Common myeloid progenitor, CD34-positive (primary cell): ENCODE measurements at regions of chr5 and their contacts with region 1.

Region 1: GRCh38 chr5:142769741-142770631 is at the start of gene ARHGAP26:
- DNase-seq: peak; percentile 94 to 97 (median 96)
- H3K4me3 ChIP-seq: peak within 1 kb of the TSS; percentile 75 to 94 (median 92)
- H3K27ac ChIP-seq: peak within 1 kb of the TSS in 1 of 2 experiments; percentile 47
- H3K4me1 ChIP-seq: peaks cover 8 to 27% (median 21%) of the 10 kb centered on the region in 4 experiments
- H3K27me3 ChIP-seq: peaks cover 0 to 3% (median 0%) of the 10 kb centered on the region in 5 experiments

Region 2: GRCh38 chr5:142798099-142798770 is 28.2 kb after region 1 on chr5:
- CTCF ChIA-PET with region 1: interaction called, 19 read pairs
- POLR2A ChIA-PET with region 1: no interaction called
- DNase-seq: peak; percentile 63 to 95 (median 92)
- H3K4me3 ChIP-seq: peak overlapping the region in 3 of 7 experiments; percentile 27 to 32 (median 31)
- H3K27ac ChIP-seq: no peak overlapping the region
- H3K4me1 ChIP-seq: peaks cover 17 to 62% (median 41%) of the 10 kb centered on the region in 4 experiments
- H3K27me3 ChIP-seq: no peaks in the 10 kb centered on the region

Region 3: GRCh38 chr5:142845402-142845921 is 75.5 kb after region 1 on chr5:
- CTCF ChIA-PET with region 1: interaction called, 13 read pairs
- POLR2A ChIA-PET with region 1: no interaction called
- DNase-seq: peak in 2 of 3 donors; percentile 21 to 38
- H3K4me3 ChIP-seq: no peak overlapping the region
- H3K27ac ChIP-seq: peak overlapping the region in 1 of 2 experiments; percentile 50
- H3K4me1 ChIP-seq: peaks cover 12 to 34% (median 25%) of the 10 kb centered on the region in 4 experiments
- H3K27me3 ChIP-seq: no peaks in the 10 kb centered on the region

Region 4: GRCh38 chr5:142874537-142874936 is 104.6 kb after region 1 on chr5:
- CTCF ChIA-PET with region 1: interaction called, 36 read pairs
- POLR2A ChIA-PET with region 1: no interaction called
- DNase-seq: no peak
- H3K4me3 ChIP-seq: no peak overlapping the region
- H3K27ac ChIP-seq: no peak overlapping the region
- H3K4me1 ChIP-seq: peaks cover 0 to 16% (median 11%) of the 10 kb centered on the region in 4 experiments
- H3K27me3 ChIP-seq: no peaks in the 10 kb centered on the region